Right ventricle myocardium inferior (tissue), 1 donor: ENCODE measurements at regions of chr6 and their contacts with region 1.

Region 1: GRCh38 chr6:154510143-154510905 is at the start of gene CNKSR3:
- DNase-seq: peak; percentile 92
- ATAC-seq: peak; percentile 92
- total RNA-seq, gene CNKSR3: 20.0 TPM

Region 2: DNA sequence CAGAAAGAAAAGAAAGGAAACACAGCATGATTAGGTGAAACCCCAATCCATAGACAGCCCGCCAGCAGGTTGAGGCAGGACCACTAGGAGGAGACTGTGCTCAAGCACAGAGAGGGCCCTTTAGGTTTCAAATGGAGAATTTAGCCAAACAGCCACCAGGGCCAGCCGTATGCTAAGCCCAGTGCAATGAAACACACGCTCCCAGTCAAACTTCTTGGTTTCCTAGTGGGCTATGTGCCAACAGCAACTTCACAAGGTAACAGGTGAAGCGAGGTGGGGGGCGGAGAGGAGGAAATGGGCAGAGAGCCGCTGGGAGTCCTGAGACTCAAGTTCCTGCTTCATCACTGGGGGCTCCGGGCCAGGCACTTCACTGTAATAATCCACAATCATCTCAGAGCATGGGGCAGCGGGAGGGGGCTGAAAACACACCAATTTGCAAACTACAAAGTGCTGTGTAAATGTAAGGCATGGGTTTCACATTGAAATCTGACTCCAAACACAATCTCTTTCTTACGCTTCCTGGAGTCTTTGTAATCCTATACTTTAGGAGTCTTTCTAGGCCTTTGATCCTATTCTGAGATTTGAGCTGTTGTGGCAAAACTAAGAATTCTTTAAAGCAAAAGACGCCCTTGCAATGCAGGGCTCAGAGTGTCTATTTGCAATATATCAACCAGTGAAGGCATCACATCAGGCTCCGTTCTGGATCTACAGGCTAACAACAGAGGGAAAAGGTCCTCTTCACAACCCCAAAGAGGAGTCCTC is 354.0 kb before region 1 on chr6:
- intact Hi-C with region 1: loop called (anchors 5 kb)
- DNase-seq: no peak
- ATAC-seq: peak; percentile 60

Region 3: GRCh38 chr6:154410619-154411072 is 99.7 kb before region 1 on chr6:
- intact Hi-C with region 1: loop called (anchors 5 kb)
- DNase-seq: no peak
- ATAC-seq: peak; percentile 87

Region 4: DNA sequence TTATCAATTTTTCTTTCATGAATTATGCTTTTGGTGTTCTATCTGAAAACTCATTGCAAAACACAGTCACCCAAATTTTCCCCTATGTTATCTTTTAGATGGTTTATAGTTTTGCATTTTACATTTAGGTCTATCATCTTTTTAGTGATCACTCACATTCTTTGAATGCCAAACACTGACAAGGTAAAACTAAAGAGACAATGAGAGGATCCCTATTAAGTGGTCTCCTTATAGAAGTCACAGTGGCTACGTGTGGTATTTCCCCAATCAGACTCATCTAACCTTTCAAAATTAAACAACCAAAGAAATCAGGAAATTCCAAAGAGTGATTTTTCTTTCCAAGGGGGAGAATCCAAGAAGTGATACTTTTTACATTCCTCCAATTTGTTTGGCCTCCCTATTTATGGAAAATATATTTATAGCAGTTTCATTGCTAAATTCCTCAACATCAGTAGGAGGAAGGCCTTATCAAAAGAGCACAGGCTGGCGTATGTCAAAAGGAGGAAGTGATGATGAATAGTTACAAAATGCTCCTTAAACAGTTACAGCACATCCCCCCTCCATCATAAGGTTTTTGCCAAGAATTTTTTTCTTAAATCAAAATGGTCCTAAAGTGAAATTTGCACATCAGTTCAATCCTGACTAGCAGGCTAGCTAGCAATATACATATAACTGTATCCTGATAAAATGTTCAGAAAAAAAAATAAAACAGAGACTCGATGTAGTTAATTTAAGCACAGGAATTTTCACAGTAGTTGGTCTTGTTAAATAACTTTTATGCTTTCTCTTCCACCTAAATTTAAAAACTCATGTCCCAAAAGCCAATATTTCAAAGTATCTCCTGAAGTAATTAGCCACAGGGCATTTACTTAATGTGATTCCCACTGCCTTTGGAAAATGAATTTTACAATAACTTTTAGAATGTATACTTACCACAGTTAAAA is 77.5 kb before region 1 on chr6:
- intact Hi-C with region 1: loop called (anchors 5 kb)
- DNase-seq: no peak
- ATAC-seq: no peak

Region 5: GRCh38 chr6:154448448-154449096 is 61.8 kb before region 1 on chr6:
- intact Hi-C with region 1: loop called (anchors 5 kb)
- DNase-seq: no peak
- ATAC-seq: peak; percentile 88

Region 6: GRCh38 chr6:154593122-154593521 is 82.8 kb after region 1 on chr6:
- intact Hi-C with region 1: loop called (anchors 5 kb)
- DNase-seq: no peak
- ATAC-seq: peak; percentile 89

Region 7: GRCh38 chr6:154613137-154613676 is 102.9 kb after region 1 on chr6:
- intact Hi-C with region 1: loop called (anchors 5 kb)
- DNase-seq: no peak
- ATAC-seq: no peak

Region 8: GRCh38 chr6:154661768-154662167 is 151.4 kb after region 1 on chr6:
- intact Hi-C with region 1: no loop called
- DNase-seq: no peak
- ATAC-seq: no peak